Adrenal gland (tissue), 19 donors: ENCODE measurements at regions of chr7 and their contacts with region 1.

Region 1: DNA sequence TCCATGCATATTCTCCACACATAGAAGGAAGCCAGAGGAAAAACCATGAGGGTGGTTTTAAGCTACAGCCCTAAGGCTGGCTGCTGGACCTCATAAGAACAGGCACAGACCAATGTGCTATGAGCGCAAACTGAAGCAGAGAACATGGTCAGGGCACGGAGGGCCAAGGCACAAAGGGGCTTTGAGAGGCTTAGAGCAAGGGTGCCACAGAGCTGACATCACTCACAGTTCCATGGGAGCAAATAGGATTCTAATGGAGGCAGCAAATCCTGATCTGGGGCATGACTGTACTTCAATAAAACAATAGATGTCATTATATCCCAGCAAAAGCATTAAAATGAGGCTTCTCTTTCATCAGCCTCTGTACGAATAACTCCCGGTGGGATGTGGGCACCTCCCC is 162.4 kb downstream of the COBL start:
- DNase-seq: no peak
- H3K4me3 ChIP-seq: no peak overlapping the region
- H3K27ac ChIP-seq: no peak overlapping the region
- H3K4me1 ChIP-seq: no peaks in the 10 kb centered on the region
- H3K27me3 ChIP-seq: no peaks in the 10 kb centered on the region
- CTCF ChIP-seq: no peak
- POLR2A ChIP-seq: no peak

Region 2: DNA sequence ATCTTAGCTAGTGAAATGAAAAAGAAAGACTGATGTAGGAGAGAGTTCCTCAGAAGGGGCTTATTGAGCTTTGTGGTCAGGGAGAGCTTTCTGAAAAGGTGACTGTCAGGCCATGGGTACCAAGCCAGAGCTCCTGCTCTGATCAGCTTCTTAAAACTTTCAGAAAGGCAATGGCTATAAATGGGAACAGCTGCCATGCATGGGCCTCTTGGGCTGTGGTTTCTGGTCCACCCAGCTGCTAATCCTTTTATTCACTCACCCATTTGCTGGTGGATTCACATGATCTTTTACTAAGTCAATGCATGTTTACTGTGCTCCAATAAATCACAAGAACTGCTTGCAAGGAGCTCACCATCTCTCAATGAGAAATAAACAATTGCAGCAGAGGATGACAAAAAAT is 1001.1 kb before region 1 on chr7:
- intact Hi-C with region 1: loop called in 1 of 2 experiments (anchors 10 kb)
- DNase-seq: no peak
- H3K4me3 ChIP-seq: no peak overlapping the region
- H3K27ac ChIP-seq: no peak overlapping the region
- H3K4me1 ChIP-seq: no peaks in the 10 kb centered on the region
- H3K27me3 ChIP-seq: no peaks in the 10 kb centered on the region
- CTCF ChIP-seq: no peak
- POLR2A ChIP-seq: no peak

Region 3: DNA sequence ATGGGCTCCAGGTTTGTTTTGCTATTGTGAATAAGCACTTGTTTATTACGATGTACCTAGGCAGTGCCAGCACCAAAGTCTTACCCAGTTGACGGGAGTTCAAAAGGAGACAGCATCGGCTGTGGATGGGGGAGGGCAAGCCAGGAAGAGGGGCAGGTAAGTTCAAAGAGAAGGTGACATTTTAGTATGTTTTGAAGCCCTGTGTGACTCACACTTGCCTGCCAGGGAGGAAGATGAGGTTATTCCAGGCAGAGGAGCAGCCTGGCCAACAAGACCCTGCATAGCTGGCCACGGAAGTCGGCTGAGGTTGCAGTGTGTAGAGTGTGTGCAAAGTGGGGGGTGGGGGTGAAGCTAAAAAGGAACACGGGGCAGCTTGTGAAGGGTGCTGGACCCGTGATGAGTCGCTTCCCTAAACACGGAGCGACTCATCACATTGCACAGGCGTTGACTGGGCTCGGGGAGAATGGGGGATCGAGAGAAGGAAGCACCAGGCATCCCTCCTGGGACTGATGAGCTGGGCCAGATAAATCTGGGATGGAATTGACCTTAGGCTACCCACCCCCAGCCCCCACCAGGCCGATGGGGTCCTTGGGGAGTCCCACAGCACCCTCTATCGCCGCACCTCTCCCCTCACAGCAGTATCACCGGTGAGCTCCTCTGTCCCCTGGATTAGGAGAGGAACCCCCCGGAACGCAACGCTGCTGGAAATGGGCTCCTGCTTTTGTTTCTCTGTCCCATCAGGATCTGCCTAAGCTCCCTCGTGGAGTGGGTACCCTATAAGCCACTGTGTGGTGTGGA is 947.5 kb before region 1 on chr7:
- intact Hi-C with region 1: loop called in 1 of 2 experiments (anchors 10 kb)
- DNase-seq: peak in 4 of 7 donors; percentile 25 to 56 (median 38)
- H3K4me3 ChIP-seq: no peak overlapping the region
- H3K27ac ChIP-seq: no peak overlapping the region
- H3K4me1 ChIP-seq: no peaks in the 10 kb centered on the region
- H3K27me3 ChIP-seq: no peaks in the 10 kb centered on the region
- CTCF ChIP-seq: no peak
- POLR2A ChIP-seq: no peak

Region 4: GRCh38 chr7:50475340-50475739 is 678.9 kb before region 1 on chr7:
- intact Hi-C with region 1: loop called in 1 of 2 experiments (anchors 10 kb)
- DNase-seq: no peak
- H3K4me3 ChIP-seq: no peak overlapping the region
- H3K27ac ChIP-seq: peak overlapping the region in 1 of 5 donors; percentile 38
- H3K4me1 ChIP-seq: no peaks in the 10 kb centered on the region
- H3K27me3 ChIP-seq: no peaks in the 10 kb centered on the region
- CTCF ChIP-seq: no peak
- POLR2A ChIP-seq: no peak